ENCODE measurements at regions of chr2 and their contacts with region 1.

Region 1: DNA sequence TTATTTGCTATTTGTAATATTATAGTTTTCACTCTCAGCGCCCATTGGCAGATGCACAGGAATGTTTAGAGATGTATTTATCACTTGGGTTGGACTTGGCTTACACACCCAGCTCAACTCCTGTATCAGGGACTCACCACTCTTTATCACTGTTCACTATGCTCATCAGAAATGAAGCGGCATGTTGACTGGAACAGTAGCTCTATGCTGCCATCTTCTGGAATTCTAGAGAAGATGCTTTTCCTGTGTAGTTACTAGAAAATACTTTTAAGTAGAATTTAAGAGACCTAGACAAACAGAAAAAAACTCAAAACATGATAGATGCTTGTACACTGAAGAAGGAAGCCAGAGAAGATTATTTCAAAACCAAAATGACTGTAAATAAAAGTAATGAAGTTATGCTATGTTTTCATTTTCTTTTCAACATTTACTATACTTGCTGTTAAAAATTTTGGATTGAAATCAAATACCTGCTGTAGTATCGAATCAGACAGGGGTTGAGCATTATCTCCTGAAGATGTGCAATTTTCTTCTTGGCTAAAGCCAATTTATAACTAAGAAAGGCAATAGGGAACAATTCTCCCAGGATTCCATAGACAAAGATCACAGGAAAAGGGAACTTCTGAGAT is 47.4 kb upstream of the NXPH2 start:
- DNase-seq: no peak
- ATAC-seq: peak; percentile 37
- H3K4me3 Mint-ChIP-seq: no peak overlapping the region
- H3K27ac Mint-ChIP-seq: no peak overlapping the region
- H3K4me1 Mint-ChIP-seq: no peaks in the 10 kb centered on the region
- H3K27me3 Mint-ChIP-seq: peaks cover 8% of the 10 kb centered on the region
- CTCF ChIP-seq: peak; percentile 54

Region 2: GRCh38 chr2:137467246-137467862 is 1360.2 kb before region 1 on chr2:
- CTCF ChIA-PET with region 1: no interaction called
- POLR2A ChIA-PET with region 1: no interaction called
- intact Hi-C with region 1: loop called (anchors 5 kb)
- DNase-seq: no peak
- ATAC-seq: no peak
- H3K4me3 Mint-ChIP-seq: no peak overlapping the region
- H3K27ac Mint-ChIP-seq: no peak overlapping the region
- H3K4me1 Mint-ChIP-seq: no peaks in the 10 kb centered on the region
- H3K27me3 Mint-ChIP-seq: no peaks in the 10 kb centered on the region
- CTCF ChIP-seq: no peak

Region 3: DNA sequence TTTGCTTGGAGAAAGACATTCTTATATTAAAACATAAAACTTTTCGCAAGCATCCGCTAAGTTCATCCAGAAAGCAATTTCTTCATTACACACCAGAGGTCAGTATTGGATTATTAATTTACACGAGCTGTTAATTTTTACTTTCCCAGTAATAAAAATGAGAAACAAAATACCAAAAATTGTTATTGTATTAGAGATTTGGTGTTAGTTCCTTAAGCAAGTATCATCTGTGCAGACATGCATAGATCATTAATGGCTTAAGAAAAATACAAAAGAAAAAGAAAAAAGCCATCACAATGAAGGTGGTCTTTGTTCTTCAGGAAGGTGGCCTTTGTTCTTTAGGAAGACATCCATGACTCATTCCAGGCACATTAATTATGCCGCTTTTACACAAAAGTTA is 916.9 kb before region 1 on chr2:
- CTCF ChIA-PET with region 1: interaction called, 50 read pairs
- POLR2A ChIA-PET with region 1: no interaction called
- intact Hi-C with region 1: loop called (anchors 1 kb)
- DNase-seq: no peak
- ATAC-seq: no peak
- H3K4me3 Mint-ChIP-seq: no peak overlapping the region
- H3K27ac Mint-ChIP-seq: no peak overlapping the region
- H3K4me1 Mint-ChIP-seq: no peaks in the 10 kb centered on the region
- H3K27me3 Mint-ChIP-seq: peaks cover 2% of the 10 kb centered on the region
- CTCF ChIP-seq: no peak

Region 4: DNA sequence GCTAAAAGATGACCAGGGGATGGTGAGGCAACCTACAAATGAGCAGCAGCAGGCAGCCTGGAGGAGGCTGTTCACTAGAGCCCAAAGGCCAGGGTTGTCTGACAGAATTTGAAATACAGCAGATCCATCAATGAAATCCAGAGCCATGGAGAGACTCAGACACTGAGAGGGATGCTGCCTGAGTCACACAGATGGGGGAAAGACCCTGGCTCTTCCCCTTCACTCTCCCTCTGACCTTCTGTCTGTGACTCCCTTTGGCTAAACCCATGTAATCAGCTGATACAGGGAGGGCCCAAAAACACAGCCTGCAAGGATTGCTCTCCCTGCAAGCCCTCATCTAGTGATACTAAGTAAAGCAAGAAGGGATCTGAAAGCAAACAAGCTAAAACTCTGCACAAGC is 492.5 kb before region 1 on chr2:
- CTCF ChIA-PET with region 1: no interaction called
- POLR2A ChIA-PET with region 1: no interaction called
- intact Hi-C with region 1: no loop called
- DNase-seq: no peak
- ATAC-seq: no peak
- H3K4me3 Mint-ChIP-seq: no peak overlapping the region
- H3K27ac Mint-ChIP-seq: no peak overlapping the region
- H3K4me1 Mint-ChIP-seq: no peaks in the 10 kb centered on the region
- H3K27me3 Mint-ChIP-seq: no peaks in the 10 kb centered on the region
- CTCF ChIP-seq: no peak

Region 5: DNA sequence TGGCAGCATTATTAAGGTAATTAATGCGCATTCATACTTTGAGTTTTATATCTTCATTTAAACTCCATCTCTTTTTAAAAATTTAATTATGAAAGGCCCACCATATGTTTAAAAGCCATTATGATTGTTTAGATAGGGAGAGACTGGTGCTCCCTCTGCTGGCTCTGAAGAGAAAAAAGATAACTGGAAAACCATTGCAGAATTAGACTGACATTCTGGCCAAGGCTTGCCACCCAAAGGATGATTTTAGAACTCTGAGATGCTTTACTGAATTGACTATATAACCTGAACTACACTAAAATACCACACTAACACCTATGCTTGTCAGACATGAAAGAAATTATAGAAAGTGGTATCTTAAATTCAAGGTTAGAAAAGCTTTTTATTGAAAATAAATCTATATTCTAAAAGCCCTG is 453.5 kb before region 1 on chr2:
- CTCF ChIA-PET with region 1: interaction called, 4 read pairs
- POLR2A ChIA-PET with region 1: no interaction called
- intact Hi-C with region 1: loop called (anchors 1 kb)
- DNase-seq: no peak
- ATAC-seq: no peak
- H3K4me3 Mint-ChIP-seq: no peak overlapping the region
- H3K27ac Mint-ChIP-seq: no peak overlapping the region
- H3K4me1 Mint-ChIP-seq: no peaks in the 10 kb centered on the region
- H3K27me3 Mint-ChIP-seq: no peaks in the 10 kb centered on the region
- CTCF ChIP-seq: no peak

Region 6: GRCh38 chr2:138814120-138814898 is 13.2 kb before region 1 on chr2:
- CTCF ChIA-PET with region 1: interaction called, 13 read pairs
- POLR2A ChIA-PET with region 1: no interaction called
- intact Hi-C with region 1: no loop called
- DNase-seq: no peak
- ATAC-seq: no peak
- H3K4me3 Mint-ChIP-seq: no peak overlapping the region
- H3K27ac Mint-ChIP-seq: no peak overlapping the region
- H3K4me1 Mint-ChIP-seq: no peaks in the 10 kb centered on the region
- H3K27me3 Mint-ChIP-seq: peaks cover 5% of the 10 kb centered on the region
- CTCF ChIP-seq: no peak